CD8-positive, alpha-beta T cell (primary cell): ENCODE measurements at regions of chr4 and their contacts with region 1.

Region 1: GRCh38 chr4:68375667-68376559 is 26.0 kb upstream of the YTHDC1 start:
- DNase-seq: peak in 8 of 9 experiments; percentile 6 to 80 (median 50)
- ATAC-seq: peak; percentile 90
- H3K4me3 ChIP-seq: peak overlapping the region; percentile 25 to 36
- H3K4me3 Mint-ChIP-seq: peak overlapping the region; percentile 85
- H3K27ac ChIP-seq: no peak overlapping the region
- H3K27ac Mint-ChIP-seq: no peak overlapping the region
- H3K4me1 ChIP-seq: peaks cover 4% of the 10 kb centered on the region
- H3K4me1 Mint-ChIP-seq: peaks cover 14% of the 10 kb centered on the region
- H3K27me3 ChIP-seq: no peaks in the 10 kb centered on the region
- H3K27me3 Mint-ChIP-seq: no peaks in the 10 kb centered on the region
- CTCF ChIP-seq: peak; percentile 87

Region 2: GRCh38 chr4:68271851-68272756 is 103.8 kb before region 1 on chr4:
- CTCF ChIA-PET with region 1: interaction called, 56 read pairs
- POLR2A ChIA-PET with region 1: no interaction called
- intact Hi-C with region 1: loop called (anchors 1 kb)
- DNase-seq: peak in 2 of 9 experiments; percentile 52 to 64
- ATAC-seq: peak; percentile 81
- H3K4me3 ChIP-seq: no peak overlapping the region
- H3K4me3 Mint-ChIP-seq: no peak overlapping the region
- H3K27ac ChIP-seq: no peak overlapping the region
- H3K27ac Mint-ChIP-seq: no peak overlapping the region
- H3K4me1 ChIP-seq: no peaks in the 10 kb centered on the region
- H3K4me1 Mint-ChIP-seq: no peaks in the 10 kb centered on the region
- H3K27me3 ChIP-seq: no peaks in the 10 kb centered on the region
- H3K27me3 Mint-ChIP-seq: peaks cover 9% of the 10 kb centered on the region
- CTCF ChIP-seq: peak; percentile 93

Region 3: DNA sequence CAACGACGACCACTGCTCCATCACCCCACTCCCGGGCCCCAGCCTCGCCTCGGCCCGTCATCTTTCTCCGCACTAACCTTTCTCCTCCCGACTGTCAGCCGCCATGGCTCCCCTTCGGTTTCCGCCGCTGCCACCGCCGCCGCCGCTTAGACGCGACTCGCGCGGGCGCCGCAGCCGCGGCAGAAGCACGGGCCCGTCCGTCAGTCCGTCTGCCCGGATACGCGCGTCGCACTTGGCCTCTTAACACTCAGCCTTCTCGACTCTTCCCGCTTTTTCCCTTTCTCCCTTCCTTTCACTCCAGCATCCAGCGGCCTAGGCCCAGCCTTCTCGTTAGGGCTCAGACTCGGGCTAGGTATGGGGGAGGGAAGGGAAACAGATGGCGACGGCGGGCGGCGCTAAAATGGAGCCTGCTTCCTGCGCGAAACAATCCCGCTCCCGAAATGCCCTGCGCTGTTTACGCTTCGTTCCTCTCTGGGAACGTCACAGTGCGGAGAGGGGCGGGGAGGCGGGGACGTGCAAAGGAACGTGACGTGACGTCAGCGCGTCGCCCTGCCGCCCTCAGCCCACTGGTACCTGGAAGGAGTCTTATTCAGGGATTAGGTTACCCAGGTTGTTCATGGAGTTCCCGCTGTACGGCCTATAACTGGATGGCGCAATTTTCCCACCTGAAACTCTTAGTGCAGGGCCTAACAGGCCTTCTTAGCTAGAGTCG is 26.1 kb before region 1 on chr4 and contains the start of gene YTHDC1:
- CTCF ChIA-PET with region 1: interaction called, 17 read pairs
- POLR2A ChIA-PET with region 1: interaction called, 4 read pairs
- intact Hi-C with region 1: loop called (anchors 1 to 2 kb)
- DNase-seq: peak; percentile 92 to 99 (median 96)
- ATAC-seq: peak; percentile 95
- H3K4me3 ChIP-seq: peak within 1 kb of the TSS; percentile 86 to 97
- H3K4me3 Mint-ChIP-seq: peak within 1 kb of the TSS; percentile 94
- H3K27ac ChIP-seq: peak within 1 kb of the TSS; percentile 95 to 96
- H3K27ac Mint-ChIP-seq: peak within 1 kb of the TSS; percentile 100
- H3K4me1 ChIP-seq: peaks cover 33% of the 10 kb centered on the region
- H3K4me1 Mint-ChIP-seq: peaks cover 38% of the 10 kb centered on the region
- H3K27me3 ChIP-seq: no peaks in the 10 kb centered on the region
- H3K27me3 Mint-ChIP-seq: no peaks in the 10 kb centered on the region
- CTCF ChIP-seq: no peak
- total RNA-seq, gene YTHDC1: 392 to 396 TPM

Region 4: DNA sequence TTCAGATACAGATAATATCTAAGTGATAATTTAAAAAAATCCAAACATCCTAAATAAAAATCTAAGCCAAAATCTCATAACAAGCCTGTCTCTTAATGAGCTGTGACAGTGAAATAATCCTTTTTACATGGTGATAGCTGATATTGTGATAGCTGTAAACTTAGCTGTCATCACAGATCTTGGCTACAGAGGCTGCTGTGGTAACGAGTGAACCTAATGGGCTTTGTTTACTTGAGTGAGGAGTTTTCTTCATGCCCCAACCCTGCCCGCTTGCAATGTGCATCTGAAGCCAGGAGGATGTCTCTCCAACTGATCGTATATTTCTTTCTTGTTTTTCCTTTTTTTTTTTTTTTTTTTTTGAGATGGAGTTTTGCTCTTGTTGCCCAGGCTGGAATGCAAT is 15.5 kb after region 1 on chr4:
- CTCF ChIA-PET with region 1: interaction called, 17 read pairs
- POLR2A ChIA-PET with region 1: interaction called, 4 read pairs
- intact Hi-C with region 1: no loop called
- DNase-seq: no peak
- ATAC-seq: no peak
- H3K4me3 ChIP-seq: no peak overlapping the region
- H3K4me3 Mint-ChIP-seq: no peak overlapping the region
- H3K27ac ChIP-seq: no peak overlapping the region
- H3K27ac Mint-ChIP-seq: no peak overlapping the region
- H3K4me1 ChIP-seq: no peaks in the 10 kb centered on the region
- H3K4me1 Mint-ChIP-seq: no peaks in the 10 kb centered on the region
- H3K27me3 ChIP-seq: peaks cover 0 to 4% of the 10 kb centered on the region in 2 experiments
- H3K27me3 Mint-ChIP-seq: peaks cover 4% of the 10 kb centered on the region
- CTCF ChIP-seq: no peak

Region 5: DNA sequence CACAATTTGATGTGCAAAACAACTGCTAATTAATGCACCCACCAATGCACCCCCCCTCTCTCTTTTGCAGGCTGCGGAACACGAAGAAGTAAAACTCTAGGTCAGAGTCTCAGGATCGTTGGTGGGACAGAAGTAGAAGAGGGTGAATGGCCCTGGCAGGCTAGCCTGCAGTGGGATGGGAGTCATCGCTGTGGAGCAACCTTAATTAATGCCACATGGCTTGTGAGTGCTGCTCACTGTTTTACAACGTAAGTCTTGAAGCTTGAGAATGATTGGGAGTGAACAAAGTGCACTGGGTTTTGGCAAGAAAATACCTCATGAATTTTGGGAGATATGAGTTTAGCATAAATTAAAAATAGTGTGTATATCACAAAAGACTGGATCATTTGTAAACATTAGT is 100.3 kb after region 1 on chr4:
- CTCF ChIA-PET with region 1: no interaction called
- POLR2A ChIA-PET with region 1: no interaction called
- intact Hi-C with region 1: loop called in 1 of 2 experiments (anchors 5 kb)
- DNase-seq: no peak
- ATAC-seq: no peak
- H3K4me3 ChIP-seq: no peak overlapping the region
- H3K4me3 Mint-ChIP-seq: no peak overlapping the region
- H3K27ac ChIP-seq: no peak overlapping the region
- H3K27ac Mint-ChIP-seq: no peak overlapping the region
- H3K4me1 ChIP-seq: no peaks in the 10 kb centered on the region
- H3K4me1 Mint-ChIP-seq: peaks cover 2% of the 10 kb centered on the region
- H3K27me3 ChIP-seq: no peaks in the 10 kb centered on the region
- H3K27me3 Mint-ChIP-seq: no peaks in the 10 kb centered on the region
- CTCF ChIP-seq: no peak